ENCODE measurements at regions of chr16 and their contacts with region 1.

Region 1: DNA sequence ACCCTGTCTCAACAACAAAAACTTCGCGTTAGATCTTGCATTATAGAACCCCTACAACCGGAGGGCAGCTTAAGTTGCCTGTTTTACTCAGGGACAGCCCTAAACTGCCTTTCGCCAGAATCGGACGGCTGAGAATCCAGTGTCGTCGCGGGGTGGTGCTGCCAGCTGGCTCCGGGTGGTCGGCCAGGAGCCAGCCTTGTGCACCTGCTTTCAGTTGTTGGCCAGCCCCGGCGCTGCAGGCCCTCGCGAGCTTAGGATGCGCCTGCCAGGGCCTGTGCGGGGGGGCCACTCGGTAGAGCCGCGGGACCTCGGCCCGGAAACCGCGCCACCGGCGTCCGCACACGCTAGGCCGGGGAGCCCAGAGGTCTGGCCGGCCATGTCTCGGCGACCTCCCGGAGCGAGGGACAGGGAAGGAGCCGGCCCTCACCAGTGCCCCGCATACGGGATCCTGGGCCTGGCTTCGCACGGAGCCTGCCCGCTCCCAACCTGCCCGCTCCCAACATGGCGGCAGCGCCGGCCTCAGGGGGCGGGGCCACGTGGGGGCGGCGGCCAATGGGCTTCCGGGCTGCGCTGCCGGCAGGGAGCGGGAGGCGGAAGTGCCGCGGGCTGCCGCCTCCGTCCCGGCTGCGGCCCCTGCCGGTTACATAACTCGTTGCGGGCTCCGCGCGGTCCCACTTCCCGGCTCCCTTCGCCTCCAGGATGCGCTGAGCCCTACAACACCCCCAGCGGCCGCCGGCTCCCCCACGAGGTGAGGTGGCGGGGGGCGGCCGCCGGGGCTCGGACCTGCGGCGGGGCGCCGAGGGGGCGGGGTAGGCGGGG is 14.2 kb downstream of the NAA60 start:
- H3K4me3 Mint-ChIP-seq: peak overlapping the region; percentile 74
- H3K27ac Mint-ChIP-seq: peak overlapping the region; percentile 85
- H3K4me1 Mint-ChIP-seq: peaks cover 52% of the 10 kb centered on the region
- H3K27me3 Mint-ChIP-seq: no peaks in the 10 kb centered on the region

Region 2: GRCh38 chr16:3264137-3265036 is 193.3 kb before region 1 on chr16:
- intact Hi-C with region 1: loop called (anchors 2 kb)
- H3K4me3 Mint-ChIP-seq: peak overlapping the region; percentile 82
- H3K27ac Mint-ChIP-seq: peak overlapping the region; percentile 96
- H3K4me1 Mint-ChIP-seq: peaks cover 24% of the 10 kb centered on the region
- H3K27me3 Mint-ChIP-seq: no peaks in the 10 kb centered on the region

Region 3: DNA sequence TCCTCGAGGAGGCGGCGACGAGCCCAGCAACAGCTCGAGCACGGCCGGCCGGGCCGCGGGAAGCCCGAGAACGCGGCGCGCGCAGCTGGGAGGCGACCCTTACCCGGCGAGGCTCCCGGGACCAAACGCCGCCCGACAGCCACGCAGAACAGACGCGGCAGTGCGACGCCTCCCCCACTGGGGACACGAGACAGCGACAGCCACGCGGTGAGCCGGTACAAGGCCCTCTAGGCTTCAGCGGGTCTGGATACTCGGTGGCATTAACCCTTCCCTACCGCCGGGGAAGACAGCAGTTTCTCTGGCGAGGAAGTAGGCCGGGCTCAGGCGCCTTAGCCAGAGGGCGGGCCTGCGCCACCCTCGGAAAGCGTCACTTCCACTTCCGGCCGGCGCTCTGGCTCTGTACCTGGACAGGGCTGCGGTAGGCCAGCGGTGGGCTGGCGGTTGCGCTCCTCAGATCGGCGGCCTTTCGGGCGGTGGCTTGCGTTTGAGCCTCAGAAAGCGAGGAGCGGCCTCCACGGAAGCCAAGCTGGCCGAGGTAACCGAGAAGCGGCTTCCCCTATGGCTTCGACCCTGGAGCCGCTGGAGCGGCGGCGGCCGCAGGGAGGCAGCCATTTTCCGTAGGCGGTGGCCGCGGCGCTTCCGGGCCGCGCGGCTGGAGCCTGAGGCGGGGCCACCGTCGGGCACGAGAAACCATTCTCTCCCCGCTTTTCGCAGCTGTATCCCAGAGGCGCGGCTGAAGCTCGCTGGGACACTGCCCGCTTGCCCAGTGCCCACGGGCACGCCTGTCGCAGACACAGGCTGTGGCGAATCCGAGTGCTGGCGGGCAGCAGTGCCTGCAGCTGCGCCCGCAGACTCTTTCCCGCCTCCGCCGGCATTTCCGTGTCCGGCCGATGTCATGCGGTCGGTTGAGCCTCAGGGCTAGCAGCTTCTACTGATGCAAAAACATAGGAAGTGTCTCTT is 152.3 kb before region 1 on chr16 and contains the starts of genes TIGD7 and ZNF75A:
- intact Hi-C with region 1: loop called (anchors 5 kb)
- H3K4me3 Mint-ChIP-seq: peak within 1 kb of the TSS; percentile 80
- H3K27ac Mint-ChIP-seq: peak within 1 kb of the TSS; percentile 90
- H3K4me1 Mint-ChIP-seq: peaks cover 8% of the 10 kb centered on the region
- H3K27me3 Mint-ChIP-seq: no peaks in the 10 kb centered on the region

Region 4: DNA sequence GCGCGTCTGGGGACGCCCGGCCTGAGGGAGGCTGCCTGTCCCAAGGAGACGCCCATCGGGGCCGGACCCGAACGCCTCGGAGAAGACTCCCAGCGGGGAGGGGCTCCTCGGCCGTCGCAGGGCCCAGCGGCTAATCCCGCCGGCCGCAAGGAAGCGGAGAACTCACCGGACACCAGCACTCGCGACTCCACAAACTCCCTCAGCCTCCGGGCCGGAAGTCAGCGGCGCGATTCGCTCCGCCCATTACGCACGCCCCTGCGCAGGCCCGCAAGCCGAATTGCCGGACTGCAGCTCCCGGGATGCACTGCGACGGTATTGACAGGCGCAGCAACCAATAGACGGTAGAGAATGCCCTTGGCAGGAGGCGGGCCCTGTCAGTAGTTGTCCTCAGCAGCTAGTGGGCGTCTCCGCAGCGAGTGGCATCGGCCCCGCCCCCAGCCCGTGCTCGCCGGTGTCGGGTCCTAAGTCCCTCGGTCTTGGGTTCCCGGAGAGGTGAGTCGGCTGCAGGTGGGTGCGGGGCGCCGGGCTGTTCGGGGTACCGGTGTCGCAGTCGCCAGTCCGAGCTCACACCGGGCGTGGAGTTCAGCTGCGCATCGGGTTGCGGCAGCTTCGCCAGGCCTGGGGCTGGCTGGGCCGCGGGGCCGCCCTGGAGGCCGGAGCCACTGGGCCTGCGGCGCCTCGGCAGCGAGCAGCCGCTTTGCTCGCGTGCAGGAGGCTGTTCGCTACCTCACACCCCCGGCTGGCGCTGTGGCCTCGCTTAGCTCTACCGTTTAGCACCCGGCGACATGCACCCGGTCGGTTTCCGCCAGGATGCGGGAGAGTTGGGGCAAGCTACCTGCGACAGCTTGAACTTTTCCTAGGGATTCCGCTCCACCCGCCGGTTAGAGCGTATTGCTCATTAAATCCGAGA is 56.6 kb before region 1 on chr16 and contains the starts of genes ZNF174 and ZSCAN32:
- intact Hi-C with region 1: loop called (anchors 1 kb)
- H3K4me3 Mint-ChIP-seq: peak within 1 kb of the TSS; percentile 96
- H3K27ac Mint-ChIP-seq: peak within 1 kb of the TSS; percentile 85
- H3K4me1 Mint-ChIP-seq: peaks cover 27% of the 10 kb centered on the region
- H3K27me3 Mint-ChIP-seq: no peaks in the 10 kb centered on the region

Region 5: GRCh38 chr16:3503523-3503922 is 45.9 kb after region 1 on chr16:
- intact Hi-C with region 1: loop called (anchors 1 kb)
- H3K4me3 Mint-ChIP-seq: no peak overlapping the region
- H3K27ac Mint-ChIP-seq: no peak overlapping the region
- H3K4me1 Mint-ChIP-seq: peaks cover 24% of the 10 kb centered on the region
- H3K27me3 Mint-ChIP-seq: peaks cover 6% of the 10 kb centered on the region

Region 6: GRCh38 chr16:3536271-3536731 is 78.7 kb after region 1 on chr16:
- intact Hi-C with region 1: no loop called
- H3K4me3 Mint-ChIP-seq: no peak overlapping the region
- H3K27ac Mint-ChIP-seq: no peak overlapping the region
- H3K4me1 Mint-ChIP-seq: no peaks in the 10 kb centered on the region
- H3K27me3 Mint-ChIP-seq: no peaks in the 10 kb centered on the region